SK-N-SH (cell line): ENCODE measurements at regions of chr12 and their contacts with region 1.

Region 1: DNA sequence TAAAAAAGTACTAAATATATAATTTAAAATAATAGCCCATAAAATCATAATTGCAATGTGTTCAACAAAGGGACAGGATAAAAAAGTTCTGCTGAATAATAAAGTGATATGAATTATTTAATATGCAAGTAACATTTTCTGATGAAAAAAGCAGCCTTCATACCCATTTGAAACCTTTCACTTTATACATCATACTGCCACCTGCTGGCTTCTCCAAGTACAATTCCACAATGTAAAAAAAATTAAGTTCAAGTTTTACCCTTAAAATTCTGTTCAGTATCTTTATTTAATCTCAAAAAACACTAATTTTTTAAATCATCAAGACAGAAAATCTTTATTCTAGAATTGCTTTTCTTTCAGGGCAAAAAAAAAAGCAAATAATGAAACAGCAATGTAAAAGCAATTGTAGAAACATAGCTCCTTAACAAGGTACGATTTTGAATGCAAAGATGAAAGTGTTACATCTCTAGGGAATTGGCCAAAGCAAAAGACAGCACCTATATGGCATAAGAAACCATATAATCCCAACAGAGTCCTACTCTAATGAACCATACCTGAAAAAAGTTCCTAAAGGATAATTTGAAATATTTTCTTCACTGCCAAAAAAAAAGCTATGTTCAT is 15.0 kb downstream of the MDM1 start:
- DNase-seq: peak; percentile 40
- H3K4me3 ChIP-seq: no peak overlapping the region
- H3K27ac ChIP-seq: no peak overlapping the region
- H3K4me1 ChIP-seq: peaks cover 4 to 7% of the 10 kb centered on the region in 2 experiments; a peak in 2 of 4 replicates
- H3K27me3 ChIP-seq: no peaks in the 10 kb centered on the region
- CTCF ChIP-seq: peak; percentile 80
- EP300 ChIP-seq: no peak
- RAD21 ChIP-seq: peak; percentile 74

Region 2: GRCh38 chr12:68223083-68223747 is 93.9 kb before region 1 on chr12:
- CTCF ChIA-PET with region 1: interaction called, 82 read pairs
- POLR2A ChIA-PET with region 1: no interaction called
- DNase-seq: peak; percentile 61
- H3K4me3 ChIP-seq: peak overlapping the region in 1 of 2 experiments; percentile 35; a peak in 1 of 4 replicates
- H3K27ac ChIP-seq: peak overlapping the region; percentile 5 to 22; a peak in 2 of 4 replicates
- H3K4me1 ChIP-seq: peaks cover 6 to 10% of the 10 kb centered on the region in 2 experiments; a peak in 3 of 4 replicates
- H3K27me3 ChIP-seq: 0 out of 2 replicates have a peak, but pooled peaks cover 4% of the 10 kb centered on the region
- CTCF ChIP-seq: peak; percentile 87
- EP300 ChIP-seq: no peak
- RAD21 ChIP-seq: peak; percentile 98

Region 3: GRCh38 chr12:68250454-68250853 is 66.7 kb before region 1 on chr12:
- CTCF ChIA-PET with region 1: interaction called, 17 read pairs
- POLR2A ChIA-PET with region 1: no interaction called
- DNase-seq: no peak
- H3K4me3 ChIP-seq: no peak overlapping the region
- H3K27ac ChIP-seq: no peak overlapping the region
- H3K4me1 ChIP-seq: peaks cover 0 to 14% of the 10 kb centered on the region in 2 experiments; a peak in 2 of 4 replicates
- H3K27me3 ChIP-seq: no peaks in the 10 kb centered on the region
- CTCF ChIP-seq: no peak
- EP300 ChIP-seq: no peak
- RAD21 ChIP-seq: no peak

Region 4: DNA sequence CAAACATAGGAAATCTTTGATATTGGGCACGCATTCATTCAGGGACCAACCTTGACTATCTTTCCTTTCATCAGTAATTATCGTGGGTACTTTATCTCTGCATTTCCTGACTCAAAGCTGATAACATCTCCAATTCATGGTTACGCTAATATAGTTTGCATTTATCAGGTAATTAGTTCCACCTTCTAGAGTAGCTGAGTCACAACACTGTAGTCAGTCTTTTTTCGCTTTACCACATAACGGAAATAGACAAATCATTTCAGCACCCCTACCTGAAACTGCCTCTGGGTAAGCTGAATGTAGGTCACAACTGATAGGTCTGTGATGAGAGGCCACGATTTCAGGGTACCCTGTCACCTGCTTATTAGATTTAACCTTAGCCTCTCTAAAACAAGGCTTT is 27.0 kb before region 1 on chr12:
- CTCF ChIA-PET with region 1: interaction called, 11 read pairs
- POLR2A ChIA-PET with region 1: no interaction called
- DNase-seq: no peak
- H3K4me3 ChIP-seq: no peak overlapping the region
- H3K27ac ChIP-seq: no peak overlapping the region
- H3K4me1 ChIP-seq: peaks cover 0 to 3% of the 10 kb centered on the region in 2 experiments; a peak in 2 of 4 replicates
- H3K27me3 ChIP-seq: no peaks in the 10 kb centered on the region
- CTCF ChIP-seq: no peak
- EP300 ChIP-seq: peak in 1 of 2 experiments; percentile 30; a peak in 1 of 4 replicates
- RAD21 ChIP-seq: no peak

Region 5: DNA sequence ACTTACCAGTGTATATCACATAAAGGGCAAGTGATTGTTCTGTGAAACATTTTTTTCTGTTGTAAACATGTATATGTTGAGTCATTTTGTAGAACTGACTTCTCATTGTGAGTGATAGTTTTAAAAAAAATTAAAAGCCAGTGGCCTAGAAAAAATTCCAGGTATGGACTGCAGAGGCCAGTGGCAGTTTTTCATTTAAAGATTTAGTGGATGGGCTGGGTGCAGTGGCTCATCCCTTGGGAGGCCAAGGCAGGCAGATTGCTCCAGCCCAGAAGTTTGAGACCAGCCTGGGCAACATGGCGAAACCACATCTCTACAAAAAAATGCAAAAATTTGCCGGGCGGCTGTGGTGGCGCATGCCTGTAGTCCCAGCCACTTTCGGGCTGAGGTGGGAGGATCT is 99.7 kb after region 1 on chr12:
- CTCF ChIA-PET with region 1: no interaction called
- POLR2A ChIA-PET with region 1: no interaction called
- DNase-seq: no peak
- H3K4me3 ChIP-seq: no peak overlapping the region
- H3K27ac ChIP-seq: no peak overlapping the region
- H3K4me1 ChIP-seq: peaks cover 0 to 10% of the 10 kb centered on the region in 2 experiments; a peak in 2 of 4 replicates
- H3K27me3 ChIP-seq: no peaks in the 10 kb centered on the region
- CTCF ChIP-seq: no peak
- EP300 ChIP-seq: no peak
- RAD21 ChIP-seq: no peak